Natural killer cell (primary cell): ENCODE measurements at regions of chr3 and their contacts with region 1.

Region 1: DNA sequence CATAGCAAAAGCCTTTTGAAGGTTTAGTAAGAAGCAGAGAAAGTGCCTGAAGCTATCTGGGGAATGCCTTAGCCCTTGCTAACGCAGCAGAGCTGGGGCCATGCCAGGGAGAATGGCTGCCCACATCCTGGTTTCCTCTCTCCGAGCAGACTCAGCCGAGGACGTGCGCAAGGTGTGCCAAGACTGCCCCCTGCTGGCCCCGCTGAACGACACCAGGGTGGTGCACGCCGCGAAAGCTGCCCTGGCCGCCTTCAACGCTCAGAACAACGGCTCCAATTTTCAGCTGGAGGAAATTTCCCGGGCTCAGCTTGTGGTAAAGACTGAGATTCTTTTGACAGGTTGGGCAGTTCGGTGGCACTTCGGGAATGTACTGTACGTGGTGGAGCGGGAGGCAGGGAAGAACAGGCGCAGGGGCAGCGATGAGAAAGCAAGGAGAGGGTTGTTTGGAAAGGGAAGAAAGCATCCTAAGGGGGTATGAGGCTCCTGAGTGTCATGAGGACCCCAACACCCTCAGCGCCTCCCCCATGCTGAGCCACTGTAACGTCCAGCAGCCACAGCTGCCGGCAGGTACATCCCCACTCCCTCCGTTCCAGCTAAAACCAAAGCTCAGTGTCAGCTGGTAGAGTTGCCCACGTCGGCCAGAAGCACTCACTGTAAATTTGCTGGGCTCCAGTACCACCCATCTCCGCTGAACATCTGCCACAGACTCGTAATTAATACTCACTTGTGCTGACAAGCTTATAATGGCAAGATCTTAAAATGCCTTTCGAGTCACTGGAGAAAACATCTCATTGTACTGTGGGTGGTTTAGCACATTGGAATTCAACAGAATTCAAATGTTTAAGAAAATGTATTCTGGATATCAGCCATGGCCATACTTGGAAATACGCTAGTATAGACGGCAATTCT is 4.4 kb downstream of the AHSG start:
- DNase-seq: peak; percentile 65 to 97
- ATAC-seq: peak; percentile 95 to 98 (median 98)
- H3K4me3 ChIP-seq: no peak overlapping the region
- H3K4me3 Mint-ChIP-seq: peak overlapping the region; percentile 28
- H3K27ac ChIP-seq: no peak overlapping the region
- H3K27ac Mint-ChIP-seq: peak overlapping the region in 1 of 2 donors; percentile 15
- H3K4me1 ChIP-seq: peaks cover 17% of the 10 kb centered on the region
- H3K4me1 Mint-ChIP-seq: peaks cover 13 to 18% of the 10 kb centered on the region in 2 donors
- H3K27me3 ChIP-seq: peaks cover 18% of the 10 kb centered on the region
- H3K27me3 Mint-ChIP-seq: peaks cover 41 to 56% of the 10 kb centered on the region in 2 donors
- CTCF ChIP-seq: peak; percentile 96

Region 2: GRCh38 chr3:185976977-185977678 is 640.2 kb before region 1 on chr3:
- intact Hi-C with region 1: loop called (anchors 2 kb)
- DNase-seq: peak; percentile 76 to 86
- ATAC-seq: peak; percentile 92 to 98 (median 97)
- H3K4me3 ChIP-seq: no peak overlapping the region
- H3K4me3 Mint-ChIP-seq: no peak overlapping the region
- H3K27ac ChIP-seq: no peak overlapping the region
- H3K27ac Mint-ChIP-seq: no peak overlapping the region
- H3K4me1 ChIP-seq: no peaks in the 10 kb centered on the region
- H3K4me1 Mint-ChIP-seq: peaks cover 0 to 5% of the 10 kb centered on the region in 2 donors
- H3K27me3 ChIP-seq: no peaks in the 10 kb centered on the region
- H3K27me3 Mint-ChIP-seq: peaks cover 0 to 6% of the 10 kb centered on the region in 2 donors
- CTCF ChIP-seq: peak; percentile 93

Region 3: GRCh38 chr3:186259612-186260383 is 357.5 kb before region 1 on chr3:
- intact Hi-C with region 1: loop called (anchors 5 kb)
- DNase-seq: peak; percentile 44 to 78
- ATAC-seq: peak; percentile 84 to 97 (median 97)
- H3K4me3 ChIP-seq: no peak overlapping the region
- H3K4me3 Mint-ChIP-seq: no peak overlapping the region
- H3K27ac ChIP-seq: no peak overlapping the region
- H3K27ac Mint-ChIP-seq: peak overlapping the region in 1 of 2 donors; percentile 29
- H3K4me1 ChIP-seq: peaks cover 22% of the 10 kb centered on the region
- H3K4me1 Mint-ChIP-seq: peaks cover 3 to 7% of the 10 kb centered on the region in 2 donors
- H3K27me3 ChIP-seq: no peaks in the 10 kb centered on the region
- H3K27me3 Mint-ChIP-seq: no peaks in the 10 kb centered on the region
- CTCF ChIP-seq: peak; percentile 61

Region 4: DNA sequence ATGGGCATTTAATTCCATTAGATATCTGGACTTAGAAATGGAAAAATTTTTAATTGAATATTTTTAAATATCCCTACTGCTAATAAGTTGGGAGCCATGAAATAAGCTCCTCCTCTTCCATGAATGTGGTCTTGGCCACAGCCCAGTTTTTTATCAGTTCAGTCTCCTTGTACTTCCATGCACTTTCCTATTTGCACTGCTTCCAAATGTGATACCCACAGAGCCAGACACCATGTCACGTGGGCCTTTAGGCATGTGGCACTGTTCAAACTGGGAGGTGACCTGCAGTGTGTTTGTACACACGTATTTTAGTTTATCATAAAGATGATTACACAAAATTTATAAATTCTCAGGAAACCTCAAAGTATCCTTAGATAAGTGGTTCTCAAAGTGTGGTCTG is 175.1 kb before region 1 on chr3:
- intact Hi-C with region 1: no loop called
- DNase-seq: no peak
- ATAC-seq: no peak
- H3K4me3 ChIP-seq: no peak overlapping the region
- H3K4me3 Mint-ChIP-seq: no peak overlapping the region
- H3K27ac ChIP-seq: no peak overlapping the region
- H3K27ac Mint-ChIP-seq: no peak overlapping the region
- H3K4me1 ChIP-seq: no peaks in the 10 kb centered on the region
- H3K4me1 Mint-ChIP-seq: no peaks in the 10 kb centered on the region
- H3K27me3 ChIP-seq: no peaks in the 10 kb centered on the region
- H3K27me3 Mint-ChIP-seq: peaks cover 4 to 14% of the 10 kb centered on the region in 2 donors
- CTCF ChIP-seq: no peak

Region 5: GRCh38 chr3:186653080-186653707 is 35.9 kb after region 1 on chr3:
- intact Hi-C with region 1: no loop called
- DNase-seq: no peak
- ATAC-seq: no peak
- H3K4me3 ChIP-seq: no peak overlapping the region
- H3K4me3 Mint-ChIP-seq: no peak overlapping the region
- H3K27ac ChIP-seq: no peak overlapping the region
- H3K27ac Mint-ChIP-seq: no peak overlapping the region
- H3K4me1 ChIP-seq: no peaks in the 10 kb centered on the region
- H3K4me1 Mint-ChIP-seq: no peaks in the 10 kb centered on the region
- H3K27me3 ChIP-seq: no peaks in the 10 kb centered on the region
- H3K27me3 Mint-ChIP-seq: peaks cover 7 to 11% of the 10 kb centered on the region in 2 donors
- CTCF ChIP-seq: no peak

Region 6: DNA sequence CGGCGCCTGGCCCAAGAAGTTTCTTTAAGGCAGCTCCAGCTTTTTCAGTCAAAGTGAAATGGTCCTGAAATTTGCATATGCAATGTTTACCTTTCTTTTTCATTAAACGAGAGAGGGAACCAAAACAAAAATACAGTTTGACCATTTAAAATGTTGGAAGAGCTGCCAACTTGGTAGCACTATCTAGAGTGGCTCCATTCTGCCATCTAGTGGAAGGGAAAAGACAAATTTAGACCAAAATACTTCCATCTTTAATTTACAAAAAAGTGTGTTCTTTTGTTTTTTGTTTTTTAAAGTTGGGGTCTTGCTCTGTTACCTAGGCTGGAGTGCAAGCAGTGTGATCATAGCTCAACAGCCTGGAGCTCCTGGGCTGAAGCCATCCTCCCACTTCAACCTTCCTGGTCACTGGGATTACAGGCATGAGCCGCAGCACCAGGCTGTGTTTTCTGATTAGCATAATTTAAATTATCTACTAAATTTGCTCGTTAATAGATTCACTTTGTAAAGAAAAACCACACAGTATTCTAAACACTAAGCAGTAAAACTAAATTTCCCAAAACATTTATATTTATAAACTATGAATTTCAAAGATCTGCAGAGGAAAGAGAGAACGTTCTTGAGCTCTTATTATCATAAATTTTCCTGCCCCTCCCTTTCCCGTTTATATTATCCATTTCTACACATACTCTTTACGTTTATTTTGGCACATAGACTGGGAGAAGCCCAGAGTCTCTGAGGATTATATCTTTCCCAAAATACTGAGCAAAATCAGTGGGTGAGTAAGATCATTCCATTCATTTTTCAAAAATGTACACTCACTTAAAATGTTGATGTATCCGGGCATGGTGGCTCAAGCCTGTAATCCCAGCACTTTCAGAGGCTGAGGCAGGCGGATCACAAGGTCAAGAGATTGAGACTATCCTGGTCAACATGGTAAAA is 204.4 kb after region 1 on chr3:
- intact Hi-C with region 1: loop called (anchors 1 kb)
- DNase-seq: peak in 1 of 2 donors; percentile 79
- ATAC-seq: peak; percentile 50 to 59 (median 51)
- H3K4me3 ChIP-seq: no peak overlapping the region
- H3K4me3 Mint-ChIP-seq: no peak overlapping the region
- H3K27ac ChIP-seq: no peak overlapping the region
- H3K27ac Mint-ChIP-seq: no peak overlapping the region
- H3K4me1 ChIP-seq: peaks cover 21% of the 10 kb centered on the region
- H3K4me1 Mint-ChIP-seq: peaks cover 10 to 18% of the 10 kb centered on the region in 2 donors
- H3K27me3 ChIP-seq: peaks cover 22% of the 10 kb centered on the region
- H3K27me3 Mint-ChIP-seq: peaks cover 19 to 21% of the 10 kb centered on the region in 2 donors
- CTCF ChIP-seq: peak; percentile 71

Region 7: GRCh38 chr3:187164885-187165543 is 547.7 kb after region 1 on chr3:
- intact Hi-C with region 1: loop called (anchors 5 kb)
- DNase-seq: peak in 1 of 2 donors; percentile 85
- ATAC-seq: peak; percentile 67 to 75 (median 71)
- H3K4me3 ChIP-seq: no peak overlapping the region
- H3K4me3 Mint-ChIP-seq: no peak overlapping the region
- H3K27ac ChIP-seq: no peak overlapping the region
- H3K27ac Mint-ChIP-seq: no peak overlapping the region
- H3K4me1 ChIP-seq: no peaks in the 10 kb centered on the region
- H3K4me1 Mint-ChIP-seq: no peaks in the 10 kb centered on the region
- H3K27me3 ChIP-seq: no peaks in the 10 kb centered on the region
- H3K27me3 Mint-ChIP-seq: peaks cover 26 to 50% of the 10 kb centered on the region in 2 donors
- CTCF ChIP-seq: peak; percentile 81

Region 8: GRCh38 chr3:188497021-188497420 is 1879.7 kb after region 1 on chr3:
- intact Hi-C with region 1: no loop called
- DNase-seq: no peak
- ATAC-seq: no peak
- H3K4me3 ChIP-seq: no peak overlapping the region
- H3K4me3 Mint-ChIP-seq: no peak overlapping the region
- H3K27ac ChIP-seq: no peak overlapping the region
- H3K27ac Mint-ChIP-seq: no peak overlapping the region
- H3K4me1 ChIP-seq: no peaks in the 10 kb centered on the region
- H3K4me1 Mint-ChIP-seq: peaks cover 7 to 12% of the 10 kb centered on the region in 2 donors
- H3K27me3 ChIP-seq: no peaks in the 10 kb centered on the region
- H3K27me3 Mint-ChIP-seq: no peaks in the 10 kb centered on the region
- CTCF ChIP-seq: no peak